ENCODE measurements at regions of chr4 and their contacts with region 1.

Region 1: GRCh38 chr4:169612871-169613859 is 782 bp upstream of the NEK1 start:
- DNase-seq: peak; percentile 73
- H3K4me3 ChIP-seq: peak overlapping the region; percentile 84
- H3K27ac ChIP-seq: peak overlapping the region; percentile 82
- H3K4me1 ChIP-seq: peaks cover 20% of the 10 kb centered on the region
- H3K27me3 ChIP-seq: no peaks in the 10 kb centered on the region
- CTCF ChIP-seq: peak; percentile 77

Region 2: DNA sequence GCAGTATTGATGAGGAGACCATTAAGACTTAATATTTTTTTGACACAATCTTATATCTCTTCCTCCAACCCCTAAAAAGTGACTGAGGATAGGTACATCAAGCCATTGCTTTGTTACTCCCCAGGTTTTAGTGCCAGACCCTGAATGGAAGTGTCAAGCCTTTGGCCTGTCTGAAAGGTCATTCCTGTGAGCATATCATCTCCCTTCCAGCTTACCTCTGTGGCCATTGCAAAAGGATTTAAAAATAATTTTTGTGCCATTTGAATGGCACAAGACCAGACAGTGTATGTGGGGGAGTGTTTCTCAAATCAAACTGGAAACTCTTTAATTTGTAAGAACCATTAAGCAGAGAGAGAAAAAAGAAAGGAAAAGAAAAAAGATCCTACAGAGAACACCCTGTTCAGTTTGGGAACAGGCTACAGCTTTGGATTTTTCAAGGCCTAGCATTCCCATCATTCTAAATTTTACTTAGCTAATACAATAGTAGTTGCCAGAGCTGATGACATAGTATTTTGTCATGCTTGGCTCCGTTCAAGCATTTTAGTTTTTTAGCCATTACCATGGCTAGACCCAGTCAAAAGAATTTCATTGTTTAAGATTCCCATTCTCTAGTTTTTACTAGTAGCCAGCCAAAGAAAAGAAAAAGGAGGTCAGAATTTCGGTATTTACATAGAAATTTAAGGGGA is 94.9 kb after region 1 on chr4:
- CTCF ChIA-PET with region 1: no interaction called
- POLR2A ChIA-PET with region 1: no interaction called
- intact Hi-C with region 1: no loop called
- DNase-seq: no peak
- H3K4me3 ChIP-seq: no peak overlapping the region
- H3K27ac ChIP-seq: 0 out of 2 replicates have a peak overlapping the region, but pooled peaks have one; percentile 12
- H3K4me1 ChIP-seq: no peaks in the 10 kb centered on the region
- H3K27me3 ChIP-seq: no peaks in the 10 kb centered on the region
- CTCF ChIP-seq: no peak

Region 3: GRCh38 chr4:169723207-169723965 is 110.2 kb after region 1 on chr4:
- CTCF ChIA-PET with region 1: interaction called, 3 read pairs
- POLR2A ChIA-PET with region 1: no interaction called
- intact Hi-C with region 1: loop called (anchors 5 kb)
- DNase-seq: no peak
- H3K4me3 ChIP-seq: no peak overlapping the region
- H3K27ac ChIP-seq: no peak overlapping the region
- H3K4me1 ChIP-seq: no peaks in the 10 kb centered on the region
- H3K27me3 ChIP-seq: no peaks in the 10 kb centered on the region
- CTCF ChIP-seq: no peak; the same call in 1 of the 2 replicates

Region 4: GRCh38 chr4:169791527-169792156 is 178.5 kb after region 1 on chr4:
- CTCF ChIA-PET with region 1: interaction called, 5 read pairs
- POLR2A ChIA-PET with region 1: no interaction called
- intact Hi-C with region 1: loop called (anchors 1 kb)
- DNase-seq: peak in 1 of 2 experiments; percentile 39
- H3K4me3 ChIP-seq: peak overlapping the region; percentile 53; the same call in 1 of the 2 replicates
- H3K27ac ChIP-seq: peak overlapping the region; percentile 35
- H3K4me1 ChIP-seq: peaks cover 10% of the 10 kb centered on the region; the same call in 1 of the 2 replicates
- H3K27me3 ChIP-seq: peaks cover 3% of the 10 kb centered on the region; the same call in 1 of the 2 replicates
- CTCF ChIP-seq: peak; percentile 31; the same call in 1 of the 2 replicates

Region 5: DNA sequence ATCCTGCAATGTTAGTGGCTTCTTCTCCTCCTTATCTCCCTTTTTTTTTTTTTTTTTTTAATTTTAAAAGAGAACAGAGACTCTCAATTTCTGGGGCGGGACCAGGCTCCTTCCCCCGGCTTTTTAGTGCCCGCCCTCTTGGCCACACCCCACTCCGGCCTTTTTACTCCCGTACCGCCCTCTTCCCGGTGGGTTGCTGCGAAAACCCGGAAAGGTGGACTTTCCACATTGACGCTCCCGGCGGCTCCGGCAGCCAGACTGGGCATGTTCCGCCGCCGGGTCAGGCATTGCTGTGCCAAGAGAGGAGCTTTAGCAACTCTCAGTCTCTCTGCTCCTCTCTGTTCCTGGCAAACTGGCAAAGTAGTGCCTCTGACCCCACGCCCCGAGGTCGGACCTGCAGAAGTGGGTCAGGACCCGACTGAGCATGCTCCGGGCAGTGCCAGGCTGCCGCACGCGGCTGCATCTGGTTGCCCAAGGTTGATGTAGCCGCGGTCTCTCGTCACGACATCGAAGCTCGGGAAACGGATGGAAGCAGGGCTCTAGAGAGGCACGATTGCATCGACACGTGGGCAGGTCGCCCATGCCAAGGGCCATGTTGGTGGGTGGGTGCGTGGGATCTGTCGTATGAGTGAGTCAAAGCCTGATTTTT is 414.1 kb after region 1 on chr4:
- CTCF ChIA-PET with region 1: no interaction called
- POLR2A ChIA-PET with region 1: no interaction called
- intact Hi-C with region 1: loop called (anchors 5 kb)
- DNase-seq: peak; percentile 63 to 92
- H3K4me3 ChIP-seq: peak overlapping the region; percentile 75; the same call in 1 of the 2 replicates
- H3K27ac ChIP-seq: peak overlapping the region; percentile 50; the same call in 1 of the 2 replicates
- H3K4me1 ChIP-seq: no peaks in the 10 kb centered on the region
- H3K27me3 ChIP-seq: no peaks in the 10 kb centered on the region
- CTCF ChIP-seq: no peak

Region 6: DNA sequence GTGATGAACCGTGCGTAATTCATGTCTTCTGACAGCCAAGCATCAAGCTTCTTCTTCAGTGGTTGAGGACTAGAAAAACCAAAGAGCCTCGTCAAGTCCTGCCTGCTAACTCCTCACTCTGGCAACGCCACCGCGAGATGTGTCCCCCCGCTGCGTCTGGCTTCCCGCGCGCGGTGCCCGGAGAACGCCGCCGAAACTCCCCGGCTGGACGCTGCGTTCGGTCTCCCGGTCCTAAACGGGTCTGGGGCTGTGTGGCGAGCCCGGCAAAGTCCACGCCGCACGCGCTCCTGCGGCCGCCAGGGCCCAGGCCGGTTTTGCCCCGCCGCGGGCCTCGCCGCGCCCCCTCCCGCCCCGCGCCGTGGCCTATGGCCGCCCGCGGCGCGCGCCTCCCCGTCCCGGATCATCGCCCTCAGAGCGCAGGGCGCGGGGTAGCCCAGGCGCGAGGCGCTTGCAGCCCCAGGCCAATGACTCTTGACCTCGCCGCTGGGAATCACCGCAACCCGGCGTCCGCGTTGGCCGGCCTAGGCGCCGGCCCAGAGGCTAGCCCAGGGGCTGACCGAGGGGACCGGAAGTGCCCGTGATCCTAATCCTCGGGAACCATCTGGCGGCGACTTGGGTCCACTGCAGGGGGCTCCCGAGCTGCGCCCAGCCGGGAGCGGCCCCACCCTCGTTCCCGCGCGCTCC is 476.6 kb after region 1 on chr4 and contains the start of gene AADAT:
- CTCF ChIA-PET with region 1: no interaction called
- POLR2A ChIA-PET with region 1: no interaction called
- intact Hi-C with region 1: loop called (anchors 1 kb)
- DNase-seq: peak; percentile 44 to 77
- H3K4me3 ChIP-seq: peak within 1 kb of the TSS; percentile 67
- H3K27ac ChIP-seq: no peak within 1 kb of the TSS
- H3K4me1 ChIP-seq: 0 out of 2 replicates have a peak, but pooled peaks cover 5% of the 10 kb centered on the region
- H3K27me3 ChIP-seq: no peaks in the 10 kb centered on the region
- CTCF ChIP-seq: peak; percentile 71
- total RNA-seq, gene AADAT: 2.6 and 3.2 TPM in 2 replicates

Measured in PC-9 (cell line).